Adrenal gland (tissue), 19 donors: ENCODE measurements at regions of chr6 and their contacts with region 1.

Region 1: DNA sequence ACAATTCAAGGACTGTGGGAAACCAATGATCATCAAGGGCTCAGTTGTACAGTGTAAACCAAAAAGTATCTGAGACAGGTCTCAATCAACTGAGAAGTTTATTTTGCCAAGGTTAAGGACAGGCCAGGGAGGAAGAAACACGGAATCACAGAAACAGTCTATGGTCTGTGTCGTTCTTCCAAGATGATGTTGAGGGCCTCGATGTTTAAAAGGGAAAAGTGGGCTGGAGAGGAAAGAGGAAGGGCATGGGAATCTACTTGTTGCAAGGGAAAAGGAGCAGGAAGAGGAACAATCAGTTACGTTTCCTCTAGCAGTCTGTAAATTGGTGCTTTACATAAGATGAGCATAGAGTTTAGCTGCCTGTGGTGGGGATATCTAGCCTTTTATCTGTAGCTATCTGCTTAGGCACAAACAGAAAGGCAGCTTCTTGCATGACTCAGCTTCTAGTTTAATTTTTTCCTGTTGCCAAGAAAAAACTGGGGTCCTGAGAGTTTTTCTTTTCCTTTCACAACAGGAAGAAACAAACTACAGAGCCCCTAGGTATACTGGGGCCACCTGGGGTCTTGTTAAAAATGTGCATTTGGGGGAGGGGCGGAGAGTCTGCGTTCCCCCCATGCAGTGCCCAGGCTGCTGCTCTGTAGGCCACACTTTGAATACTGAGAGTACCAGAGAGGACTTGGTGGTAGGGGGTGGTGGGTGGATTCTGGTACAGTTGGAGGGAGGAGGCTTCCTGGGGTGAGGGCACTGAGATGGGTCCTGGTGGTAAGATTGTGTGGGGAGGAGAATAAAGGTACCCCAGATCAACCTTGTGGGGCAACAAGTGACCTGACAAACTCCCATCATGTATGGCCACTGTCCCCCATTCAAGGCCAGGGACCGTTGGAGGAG is 35.3 kb upstream of the EZR start:
- DNase-seq: no peak
- H3K4me3 ChIP-seq: no peak overlapping the region
- H3K27ac ChIP-seq: peak overlapping the region in 1 of 5 donors; percentile 14
- H3K4me1 ChIP-seq: peaks cover 12 to 22% of the 10 kb centered on the region in 2 donors
- H3K27me3 ChIP-seq: no peaks in the 10 kb centered on the region
- CTCF ChIP-seq: no peak
- POLR2A ChIP-seq: no peak

Region 2: DNA sequence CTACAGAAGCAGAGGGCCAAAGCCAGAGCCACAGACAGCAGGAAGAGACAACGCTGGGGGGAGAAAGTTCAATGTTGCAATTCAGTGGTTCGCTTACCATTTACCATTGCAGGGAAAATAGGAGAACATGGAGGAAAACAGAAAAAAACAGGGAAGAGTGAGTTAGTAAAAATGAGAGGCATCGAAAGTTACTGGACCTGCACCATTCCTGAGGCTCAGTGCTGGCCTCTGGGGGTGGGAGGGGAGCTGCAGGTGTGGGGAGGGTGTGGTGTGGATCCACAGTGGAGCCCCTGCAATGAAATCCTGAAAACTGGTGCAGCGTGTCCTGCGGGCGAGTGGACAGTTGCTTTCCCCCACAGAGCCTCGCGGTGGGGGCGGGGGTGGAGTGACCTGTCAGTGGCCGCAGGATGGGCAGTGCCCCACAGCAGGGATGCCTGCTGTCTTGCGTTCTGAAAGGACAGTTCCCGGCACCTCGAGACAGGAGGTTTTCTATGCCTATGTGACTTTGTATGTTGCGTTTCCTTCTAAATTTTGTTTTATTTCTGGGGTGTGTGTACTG is 288.9 kb before region 1 on chr6:
- intact Hi-C with region 1: no loop called
- DNase-seq: no peak
- H3K4me3 ChIP-seq: no peak overlapping the region
- H3K27ac ChIP-seq: no peak overlapping the region
- H3K4me1 ChIP-seq: peaks cover 9 to 26% of the 10 kb centered on the region in 2 donors
- H3K27me3 ChIP-seq: no peaks in the 10 kb centered on the region
- CTCF ChIP-seq: no peak
- POLR2A ChIP-seq: no peak

Region 3: DNA sequence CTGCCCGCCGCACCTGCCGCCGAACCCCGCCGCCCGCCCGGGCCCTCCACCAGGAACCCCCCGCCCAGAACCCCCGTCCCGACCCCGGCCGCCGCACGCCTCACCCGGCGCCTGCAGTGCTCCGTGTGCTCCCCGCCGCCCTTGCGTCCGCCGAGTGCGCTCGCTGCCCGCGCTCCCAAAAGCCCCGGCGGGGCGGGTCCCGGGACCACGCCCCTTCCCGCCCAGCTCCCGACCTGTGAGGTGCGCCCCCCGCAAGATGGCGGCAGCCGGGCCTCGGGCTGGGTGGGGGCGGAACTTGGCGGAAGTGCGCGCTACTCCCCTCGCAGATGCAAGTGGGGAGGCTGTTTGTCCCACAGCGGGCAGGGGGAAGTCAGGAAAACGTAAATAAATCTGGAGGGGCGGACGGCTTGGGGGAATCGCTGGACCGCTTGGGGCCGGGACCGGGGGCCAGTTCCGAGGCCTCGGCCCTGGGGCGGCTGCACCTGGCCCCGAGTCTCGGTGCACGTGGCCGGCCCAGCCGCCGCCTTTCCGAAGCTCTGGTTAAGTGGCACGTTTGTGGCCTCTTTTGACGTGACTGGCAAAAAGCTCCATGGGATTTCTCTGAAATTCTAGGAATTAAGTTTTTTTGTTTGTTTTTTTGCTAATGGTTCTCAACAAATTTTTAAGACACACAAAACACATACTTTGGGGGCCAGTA is 35.1 kb before region 1 on chr6 and contains the start of gene EZR:
- intact Hi-C with region 1: loop called in 1 of 2 experiments (anchors 5 kb)
- DNase-seq: peak; percentile 77 to 86 (median 80)
- H3K4me3 ChIP-seq: peak within 1 kb of the TSS; percentile 37 to 83 (median 66)
- H3K27ac ChIP-seq: peak within 1 kb of the TSS; percentile 64 to 97 (median 91)
- H3K4me1 ChIP-seq: peaks cover 18 to 27% of the 10 kb centered on the region in 2 donors
- H3K27me3 ChIP-seq: no peaks in the 10 kb centered on the region
- CTCF ChIP-seq: no peak
- POLR2A ChIP-seq: peak in 1 of 2 donors; percentile 79
- total RNA-seq, gene EZR: 190 to 476 (median 386) TPM